K562 (cell line): ENCODE measurements at regions of chr18 and their contacts with region 1.

Region 1: DNA sequence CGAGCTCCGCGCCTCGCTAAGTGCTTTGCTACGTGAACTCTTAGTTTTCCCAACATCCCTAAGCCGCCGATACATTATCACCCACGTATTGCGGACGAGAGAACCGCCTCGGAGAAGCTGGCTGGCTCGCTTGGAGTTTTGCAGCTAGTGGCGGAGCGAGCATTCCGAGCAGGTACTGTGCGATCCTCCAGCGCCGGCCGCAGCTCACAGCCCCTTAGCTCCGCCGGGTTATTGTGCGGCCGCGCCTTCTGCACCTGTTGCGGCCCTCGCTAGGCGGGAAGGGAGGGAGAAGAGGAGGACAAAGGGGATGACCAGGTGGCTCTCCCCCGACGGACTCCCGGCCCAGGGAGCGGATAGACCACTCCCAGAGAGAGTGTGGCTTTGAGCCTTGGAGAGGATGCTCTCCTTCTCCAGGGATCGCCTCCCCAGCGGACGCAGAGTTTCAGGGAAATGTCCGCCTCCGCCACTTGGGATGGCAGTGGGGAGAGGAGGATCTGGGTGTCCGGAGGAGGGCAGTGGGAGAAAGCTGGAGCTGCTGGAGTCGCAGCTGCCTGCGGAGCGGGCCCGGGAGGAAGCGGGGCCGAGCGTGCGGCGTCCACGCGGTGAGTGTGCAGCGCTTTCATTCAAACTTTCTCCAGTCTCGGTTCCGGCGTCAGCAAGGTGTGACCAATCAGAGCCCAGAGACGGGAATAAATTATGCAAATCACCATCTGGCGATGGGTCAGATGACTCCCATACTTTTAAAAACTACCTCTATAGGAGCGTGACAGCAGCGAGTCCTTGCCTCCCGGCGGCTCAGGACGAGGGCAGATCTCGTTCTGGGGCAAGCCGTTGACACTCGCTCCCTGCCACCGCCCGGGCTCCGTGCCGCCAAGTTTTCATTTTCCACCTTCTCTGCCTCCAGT is at the start of gene LIPG:
- DNase-seq: peak; percentile 75 to 80 (median 78)
- ATAC-seq: peak; percentile 94
- H3K4me3 ChIP-seq: peak within 1 kb of the TSS; percentile 18; the same call in 1 of the 2 replicates
- H3K27ac ChIP-seq: no peak within 1 kb of the TSS
- H3K4me1 ChIP-seq: peaks cover 0 to 23% of the 10 kb centered on the region in 2 experiments; a peak in 4 of 5 replicates
- H3K27me3 ChIP-seq: peaks cover 0 to 21% of the 10 kb centered on the region in 2 experiments; a peak in 3 of 5 replicates
- CTCF ChIP-seq: no peak
- EP300 ChIP-seq: no peak
- POLR2A ChIP-seq: no peak
- RAD21 ChIP-seq: no peak
- polyA plus RNA-seq, gene LIPG: 0.76 to 1.6 TPM

Region 2: GRCh38 chr18:49728542-49728941 is 167.0 kb after region 1 on chr18:
- CTCF ChIA-PET with region 1: no interaction called
- POLR2A ChIA-PET with region 1: no interaction called
- in situ Hi-C with region 1: no loop called
- intact Hi-C with region 1: loop called (anchors 10 kb)
- DNase-seq: peak; percentile 37 to 65 (median 44)
- ATAC-seq: peak; percentile 90
- H3K4me3 ChIP-seq: no peak overlapping the region
- H3K27ac ChIP-seq: no peak overlapping the region
- H3K4me1 ChIP-seq: peaks cover 0 to 10% of the 10 kb centered on the region in 2 experiments; a peak in 4 of 5 replicates
- H3K27me3 ChIP-seq: no peaks in the 10 kb centered on the region; a peak in 2 of 5 replicates
- CTCF ChIP-seq: peak; percentile 64 to 71 (median 68)
- EP300 ChIP-seq: no peak
- POLR2A ChIP-seq: no peak
- RAD21 ChIP-seq: peak; percentile 54 to 70